A549 (cell line): ENCODE measurements at regions of chr12 and their contacts with region 1.

Region 1: GRCh38 chr12:66693901-66694675 is 15.2 kb upstream of the GRIP1 start:
- DNase-seq: peak; percentile 48 to 80
- ATAC-seq: peak; percentile 95 to 98
- H3K4me3 ChIP-seq: no peak overlapping the region
- H3K27ac ChIP-seq: no peak overlapping the region
- H3K4me1 ChIP-seq: no peaks in the 10 kb centered on the region
- CTCF ChIP-seq: peak; percentile 68
- EP300 ChIP-seq: no peak
- POLR2A ChIP-seq: no peak
- RAD21 ChIP-seq: peak; percentile 70 to 71

Region 2: DNA sequence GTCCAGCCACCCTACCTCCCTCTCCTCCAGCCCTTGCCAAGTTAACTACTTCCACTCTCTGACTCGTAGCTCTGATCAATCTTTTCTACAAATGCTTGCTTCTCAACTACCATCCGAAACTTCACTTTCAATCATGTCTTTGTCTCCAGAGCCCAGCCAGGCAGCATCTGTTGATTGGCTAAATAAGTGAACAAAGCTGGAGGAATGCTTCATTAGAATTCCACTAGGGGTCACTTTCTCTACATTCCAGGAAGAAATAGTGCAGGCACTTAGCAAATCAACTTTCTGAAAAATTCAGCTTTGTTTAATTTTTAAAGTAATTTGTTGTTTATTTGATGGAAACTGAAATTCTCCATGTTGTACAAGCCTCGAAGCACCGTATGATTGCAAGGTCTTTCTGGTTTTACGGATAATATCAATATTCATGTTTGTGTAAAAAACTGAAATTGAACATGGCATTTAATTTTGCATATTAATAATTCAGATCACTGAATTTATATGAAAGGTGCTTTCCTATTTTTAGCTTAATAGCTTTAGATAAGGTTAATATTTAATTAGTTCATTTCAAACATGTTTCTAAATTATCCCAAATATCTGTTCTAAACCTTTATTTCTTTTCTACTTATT is 424.2 kb before region 1 on chr12:
- CTCF ChIA-PET with region 1: interaction called, 12 read pairs
- POLR2A ChIA-PET with region 1: no interaction called
- DNase-seq: peak; percentile 47 to 53
- ATAC-seq: peak; percentile 83 to 90; a peak in 5 of 6 replicates
- H3K4me3 ChIP-seq: no peak overlapping the region
- H3K27ac ChIP-seq: no peak overlapping the region
- H3K4me1 ChIP-seq: no peaks in the 10 kb centered on the region
- CTCF ChIP-seq: peak; percentile 70
- EP300 ChIP-seq: no peak
- POLR2A ChIP-seq: no peak
- RAD21 ChIP-seq: peak; percentile 63 to 65

Region 3: GRCh38 chr12:66683073-66683472 is 11.0 kb before region 1 on chr12:
- CTCF ChIA-PET with region 1: interaction called, 27 read pairs
- POLR2A ChIA-PET with region 1: no interaction called
- DNase-seq: no peak
- ATAC-seq: no peak
- H3K4me3 ChIP-seq: no peak overlapping the region
- H3K27ac ChIP-seq: no peak overlapping the region
- H3K4me1 ChIP-seq: no peaks in the 10 kb centered on the region
- CTCF ChIP-seq: no peak
- EP300 ChIP-seq: no peak
- POLR2A ChIP-seq: no peak
- RAD21 ChIP-seq: no peak

Region 4: DNA sequence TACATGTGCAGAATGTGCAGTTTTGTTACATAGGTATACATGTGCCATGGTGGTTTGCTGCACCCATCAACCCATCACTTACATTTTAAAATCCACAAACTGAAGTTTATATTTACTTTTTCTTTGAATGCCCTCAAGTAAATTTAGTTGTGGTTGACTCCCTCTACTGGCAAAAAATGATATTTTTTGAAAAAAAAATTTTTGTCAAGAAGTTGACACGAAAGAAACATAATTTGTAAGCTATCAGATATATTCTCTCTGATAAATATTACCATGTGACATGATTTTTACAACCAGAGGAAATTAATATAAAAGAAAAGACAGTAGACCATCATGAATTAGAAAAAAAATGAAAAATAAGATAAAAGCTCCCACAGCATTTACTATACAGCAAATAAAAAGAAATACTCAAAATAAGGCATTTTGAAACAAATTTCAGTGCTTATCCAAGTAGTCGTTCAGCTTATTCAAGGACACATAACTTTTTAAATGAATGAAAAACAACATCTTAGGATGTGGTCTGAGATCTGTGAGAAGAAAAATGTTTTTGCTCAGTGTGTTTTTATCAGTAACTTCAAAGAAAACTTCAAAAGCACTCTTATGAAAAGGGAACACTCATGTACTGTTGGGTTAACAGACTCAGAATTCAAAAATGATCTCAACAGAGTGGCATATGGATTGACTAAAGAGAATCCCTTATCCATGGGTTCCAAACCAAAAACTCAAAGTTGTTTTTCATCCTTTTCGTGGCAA is 14.8 kb after region 1 on chr12:
- CTCF ChIA-PET with region 1: interaction called, 11 read pairs
- POLR2A ChIA-PET with region 1: no interaction called
- DNase-seq: no peak
- ATAC-seq: no peak
- H3K4me3 ChIP-seq: no peak overlapping the region
- H3K27ac ChIP-seq: no peak overlapping the region
- H3K4me1 ChIP-seq: no peaks in the 10 kb centered on the region
- CTCF ChIP-seq: peak; percentile 42
- EP300 ChIP-seq: no peak
- POLR2A ChIP-seq: no peak
- RAD21 ChIP-seq: no peak; a peak in 1 of 5 replicates